ENCODE measurements at regions of chr22 and their contacts with region 1.

Region 1: GRCh38 chr22:26589845-26590736 is at the start of gene TPST2:
- DNase-seq: peak; percentile 25 to 91 (median 79)

Region 2: DNA sequence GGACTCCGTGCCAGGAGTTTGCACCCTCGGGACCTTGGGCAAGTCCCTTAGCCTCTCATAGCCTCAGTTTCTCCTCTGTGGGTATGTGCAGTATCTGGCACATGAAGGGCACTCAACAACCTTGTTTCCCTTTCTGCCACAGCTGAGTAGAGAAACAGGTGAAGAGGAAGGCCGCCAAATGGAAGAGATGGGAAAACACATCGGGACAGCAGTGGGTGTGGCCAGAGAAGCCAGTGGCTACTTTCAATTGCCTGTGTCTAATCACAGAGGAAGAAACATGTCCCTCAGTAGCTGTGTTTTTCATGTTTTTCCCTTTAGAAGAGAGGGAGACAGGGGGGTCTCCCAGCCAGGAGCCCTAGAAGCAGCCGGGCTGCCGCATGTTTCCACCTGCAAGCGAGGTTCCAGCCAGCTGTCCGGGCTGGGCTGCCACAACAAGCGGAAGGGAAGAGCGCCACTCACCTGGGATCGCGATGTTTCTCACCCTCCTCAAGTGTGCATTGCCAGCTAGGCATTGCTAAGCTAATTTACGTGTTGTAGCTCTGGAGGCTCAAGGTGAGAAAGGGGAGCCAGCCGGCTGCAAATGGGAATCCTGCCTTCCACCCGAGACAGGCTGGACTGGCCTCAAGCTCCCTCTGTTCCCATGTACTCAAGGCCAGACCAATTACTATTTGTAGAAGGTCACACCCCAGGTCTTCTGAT is 144.4 kb before region 1 on chr22:
- intact Hi-C with region 1: no loop called
- DNase-seq: peak in 4 of 42 donors; percentile 3 to 39 (median 26)

Region 3: DNA sequence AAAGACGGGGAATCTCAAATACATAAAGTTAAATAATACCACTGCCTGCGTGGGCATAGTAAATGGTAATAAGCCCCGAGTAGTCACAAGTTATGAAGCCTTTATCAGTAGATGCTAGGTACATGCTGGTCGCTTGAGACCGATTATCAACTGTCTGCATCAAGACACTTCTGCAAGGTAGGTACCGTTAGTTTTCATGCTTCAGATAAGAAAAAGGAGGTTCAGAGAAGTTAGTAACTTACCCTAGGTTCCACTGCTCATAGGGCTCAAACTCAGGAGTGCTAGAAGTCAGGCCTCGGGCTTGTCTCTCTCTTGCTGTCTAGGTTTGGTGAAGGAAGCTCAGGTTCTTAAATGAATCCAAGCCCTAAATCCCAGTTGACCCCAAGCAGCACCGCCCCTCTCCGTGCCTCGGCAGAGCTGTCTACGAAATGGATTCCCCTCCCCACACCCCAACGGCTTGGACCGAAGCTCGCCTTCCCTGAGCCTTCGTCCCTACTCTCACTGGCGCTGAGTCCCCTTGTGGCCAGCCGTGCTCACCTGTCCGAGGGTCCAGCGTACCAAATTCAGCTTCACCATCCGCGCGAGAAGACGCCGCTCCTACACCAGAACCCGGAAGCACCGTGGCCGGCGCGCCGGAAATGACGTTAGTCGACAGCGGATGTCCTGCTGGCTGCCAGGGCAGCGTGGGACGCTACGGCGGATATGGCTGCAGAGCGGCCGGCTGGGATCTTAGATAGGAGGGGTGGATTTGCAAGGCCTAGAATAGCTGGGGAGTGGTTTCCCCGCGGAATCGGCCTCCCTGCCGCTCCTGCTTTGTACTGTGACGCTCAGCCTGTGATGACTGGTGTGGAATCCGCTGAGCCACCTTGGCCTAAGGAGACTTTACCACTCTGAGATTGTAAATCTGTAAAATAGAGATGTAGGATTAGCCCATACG is 78.0 kb before region 1 on chr22 and contains the start of gene TFIP11:
- intact Hi-C with region 1: loop called (anchors 10 kb)
- DNase-seq: peak; percentile 88 to 99 (median 97)

Region 4: GRCh38 chr22:26629988-26630761 is 40.1 kb after region 1 on chr22:
- intact Hi-C with region 1: no loop called
- DNase-seq: no peak